Activated naive CD4-positive, alpha-beta T cell treated with anti-CD3 and anti-CD28 coated beads for 36 hours (primary cell): ENCODE measurements at regions of chr5 and their contacts with region 1.

Region 1: DNA sequence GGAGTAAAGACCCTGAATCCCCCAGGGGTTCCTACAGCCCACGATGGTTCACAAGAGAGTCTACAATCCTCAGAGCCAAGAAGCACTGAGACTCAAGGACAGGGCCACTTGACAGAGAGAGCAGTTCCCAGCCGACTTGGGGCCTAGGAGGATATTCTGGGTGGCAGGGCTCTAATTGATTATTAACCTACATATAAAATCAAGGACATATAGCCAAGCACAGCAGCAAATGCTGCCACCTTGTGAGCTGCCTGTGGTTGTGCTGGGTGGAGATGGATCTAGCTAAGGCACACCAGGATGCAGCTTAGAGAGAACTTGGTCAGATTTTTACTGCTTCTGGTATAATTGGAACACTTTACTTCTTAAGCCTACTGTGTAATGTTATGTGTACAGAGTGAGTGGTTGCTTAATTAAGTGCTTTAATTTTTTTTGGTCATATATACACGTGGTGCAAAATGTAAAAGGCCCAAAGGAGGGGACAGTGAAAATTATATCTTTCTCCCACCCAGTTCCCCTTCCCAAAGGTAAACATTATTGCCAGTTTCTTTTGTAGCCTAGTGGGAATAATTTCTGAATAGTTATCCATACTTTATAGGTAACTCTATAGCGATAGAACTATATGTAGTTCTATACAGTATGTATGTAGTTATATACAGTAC is 78.8 kb downstream of the F2RL2 start:
- DNase-seq: peak; percentile 84
- H3K4me3 Mint-ChIP-seq: peak overlapping the region; percentile 71
- H3K27ac Mint-ChIP-seq: peak overlapping the region; percentile 97
- H3K4me1 Mint-ChIP-seq: peaks cover 86% of the 10 kb centered on the region
- H3K27me3 Mint-ChIP-seq: no peaks in the 10 kb centered on the region

Region 2: GRCh38 chr5:75336625-75337339 is 1207.6 kb before region 1 on chr5 and contains the start of gene HMGCR:
- CTCF ChIA-PET with region 1: interaction called, 3 read pairs
- intact Hi-C with region 1: loop called (anchors 2 kb)
- DNase-seq: peak; percentile 99
- H3K4me3 Mint-ChIP-seq: no peak within 1 kb of the TSS
- H3K27ac Mint-ChIP-seq: no peak within 1 kb of the TSS
- H3K4me1 Mint-ChIP-seq: peaks cover 35% of the 10 kb centered on the region
- H3K27me3 Mint-ChIP-seq: no peaks in the 10 kb centered on the region
- total RNA-seq, gene HMGCR: 61.7 to 67.5 TPM

Region 3: GRCh38 chr5:75717082-75717922 is 827.1 kb before region 1 on chr5 and contains the start of gene POC5:
- CTCF ChIA-PET with region 1: no interaction called
- intact Hi-C with region 1: loop called (anchors 5 kb)
- DNase-seq: peak; percentile 98
- H3K4me3 Mint-ChIP-seq: peak within 1 kb of the TSS; percentile 99
- H3K27ac Mint-ChIP-seq: peak within 1 kb of the TSS; percentile 99
- H3K4me1 Mint-ChIP-seq: peaks cover 30% of the 10 kb centered on the region
- H3K27me3 Mint-ChIP-seq: no peaks in the 10 kb centered on the region
- total RNA-seq, gene POC5: 17.5 to 17.7 TPM

Region 4: GRCh38 chr5:76269932-76270610 is 274.3 kb before region 1 on chr5:
- CTCF ChIA-PET with region 1: interaction called, 7 read pairs
- intact Hi-C with region 1: loop called (anchors 1 kb)
- DNase-seq: peak; percentile 65
- H3K4me3 Mint-ChIP-seq: peak overlapping the region; percentile 10
- H3K27ac Mint-ChIP-seq: peak overlapping the region; percentile 83
- H3K4me1 Mint-ChIP-seq: peaks cover 21% of the 10 kb centered on the region
- H3K27me3 Mint-ChIP-seq: no peaks in the 10 kb centered on the region

Region 5: DNA sequence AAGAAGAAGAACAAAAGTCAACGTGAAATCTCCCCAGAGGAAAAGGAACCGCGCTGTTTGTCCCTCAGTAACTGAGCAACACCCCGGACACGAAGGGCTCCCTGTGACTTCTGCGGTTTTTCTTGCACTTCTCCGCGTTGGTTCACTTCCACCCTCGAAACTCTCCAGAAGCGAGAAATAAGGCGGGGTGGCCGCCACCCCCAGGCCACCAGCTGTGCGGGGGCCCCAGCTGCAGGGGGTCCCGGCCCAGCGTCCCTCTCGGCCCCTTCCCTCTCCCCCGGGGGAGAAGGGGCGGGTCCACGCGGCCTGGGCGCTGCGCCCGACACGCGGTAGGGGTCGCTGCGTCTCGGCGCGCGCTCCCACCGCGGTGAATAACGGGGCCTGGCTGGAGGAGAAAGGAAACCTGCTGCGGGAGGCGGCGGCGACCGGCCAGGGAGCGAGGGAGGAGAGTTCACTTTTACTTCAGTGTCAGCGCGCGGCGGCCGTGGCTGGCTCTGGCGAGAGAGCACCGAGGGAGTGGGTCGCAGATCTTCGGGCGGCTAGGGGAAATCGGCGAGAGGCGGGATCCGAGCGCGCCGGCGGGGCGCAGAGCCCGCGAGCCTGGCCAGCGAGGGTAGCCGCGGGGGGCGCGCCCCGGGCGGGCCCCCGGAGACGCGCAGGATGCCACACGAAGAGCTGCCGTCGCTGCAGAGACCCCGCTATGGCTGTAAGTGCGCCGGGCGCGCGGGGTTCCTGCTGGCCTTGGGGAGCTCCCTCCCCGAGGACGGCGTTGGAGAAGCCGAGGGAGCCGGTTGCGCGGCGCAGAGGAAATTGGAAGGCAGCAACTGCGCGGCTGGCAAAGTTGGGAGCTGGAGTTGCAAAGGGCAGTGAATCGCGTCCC is 141.3 kb before region 1 on chr5 and contains the start of gene IQGAP2:
- CTCF ChIA-PET with region 1: interaction called, 93 read pairs
- intact Hi-C with region 1: loop called (anchors 1 kb)
- DNase-seq: peak; percentile 79
- H3K4me3 Mint-ChIP-seq: peak within 1 kb of the TSS; percentile 95
- H3K27ac Mint-ChIP-seq: peak within 1 kb of the TSS; percentile 98
- H3K4me1 Mint-ChIP-seq: peaks cover 44% of the 10 kb centered on the region
- H3K27me3 Mint-ChIP-seq: no peaks in the 10 kb centered on the region
- total RNA-seq, gene IQGAP2: 54.6 to 55.9 TPM

Region 6: DNA sequence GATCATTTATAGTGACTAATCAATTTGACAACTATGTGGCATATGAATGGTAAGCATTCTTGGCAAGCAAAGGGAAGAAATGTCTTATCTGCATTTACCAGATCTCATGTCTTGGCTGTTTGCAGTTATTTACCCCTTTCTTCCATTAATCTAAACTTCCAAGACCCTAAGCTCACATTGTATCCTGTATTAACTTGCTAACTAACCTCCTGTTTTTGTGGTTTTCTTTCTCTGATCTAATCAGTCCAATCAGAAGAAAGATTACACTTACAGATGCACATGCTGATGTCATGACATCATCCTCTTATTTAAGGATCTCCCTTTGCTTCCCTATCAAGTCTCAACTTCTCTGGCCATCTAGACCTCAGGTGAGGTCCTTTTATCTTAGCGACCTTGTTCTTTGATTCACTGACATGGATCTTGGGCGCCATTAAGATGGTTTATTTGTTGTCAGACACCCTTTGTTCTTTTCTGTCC is 16.7 kb before region 1 on chr5:
- CTCF ChIA-PET with region 1: interaction called, 13 read pairs
- intact Hi-C with region 1: no loop called
- DNase-seq: no peak
- H3K4me3 Mint-ChIP-seq: no peak overlapping the region
- H3K27ac Mint-ChIP-seq: no peak overlapping the region
- H3K4me1 Mint-ChIP-seq: peaks cover 63% of the 10 kb centered on the region
- H3K27me3 Mint-ChIP-seq: no peaks in the 10 kb centered on the region

Region 7: GRCh38 chr5:76691467-76692138 is 147.2 kb after region 1 on chr5:
- CTCF ChIA-PET with region 1: interaction called, 3 read pairs
- intact Hi-C with region 1: loop called (anchors 2 kb)
- DNase-seq: no peak
- H3K4me3 Mint-ChIP-seq: no peak overlapping the region
- H3K27ac Mint-ChIP-seq: peak overlapping the region; percentile 36
- H3K4me1 Mint-ChIP-seq: peaks cover 15% of the 10 kb centered on the region
- H3K27me3 Mint-ChIP-seq: no peaks in the 10 kb centered on the region